H1 (cell line): ENCODE measurements at regions of chr11 and their contacts with region 1.

Region 1: GRCh38 chr11:27183672-27184457 is 143.2 kb downstream of the BBOX1 start:
- DNase-seq: no peak
- H3K4me3 ChIP-seq: no peak overlapping the region
- H3K27ac ChIP-seq: no peak overlapping the region
- H3K4me1 ChIP-seq: no peaks in the 10 kb centered on the region
- H3K27me3 ChIP-seq: no peaks in the 10 kb centered on the region
- CTCF ChIP-seq: peak in 2 of 3 experiments; percentile 59 to 61; a peak in 2 of 4 replicates
- EP300 ChIP-seq: no peak
- POLR2A ChIP-seq: no peak
- RAD21 ChIP-seq: peak; percentile 91 to 92

Region 2: GRCh38 chr11:27201454-27202236 is 17.8 kb after region 1 on chr11:
- CTCF ChIA-PET with region 1: interaction called, 16 read pairs
- POLR2A ChIA-PET with region 1: no interaction called
- DNase-seq: no peak
- H3K4me3 ChIP-seq: no peak overlapping the region
- H3K27ac ChIP-seq: no peak overlapping the region
- H3K4me1 ChIP-seq: peaks cover 0 to 8% (median 5%) of the 10 kb centered on the region in 4 experiments; a peak in 3 of 7 replicates
- H3K27me3 ChIP-seq: no peaks in the 10 kb centered on the region
- CTCF ChIP-seq: no peak
- EP300 ChIP-seq: no peak
- POLR2A ChIP-seq: no peak
- RAD21 ChIP-seq: no peak

Region 3: DNA sequence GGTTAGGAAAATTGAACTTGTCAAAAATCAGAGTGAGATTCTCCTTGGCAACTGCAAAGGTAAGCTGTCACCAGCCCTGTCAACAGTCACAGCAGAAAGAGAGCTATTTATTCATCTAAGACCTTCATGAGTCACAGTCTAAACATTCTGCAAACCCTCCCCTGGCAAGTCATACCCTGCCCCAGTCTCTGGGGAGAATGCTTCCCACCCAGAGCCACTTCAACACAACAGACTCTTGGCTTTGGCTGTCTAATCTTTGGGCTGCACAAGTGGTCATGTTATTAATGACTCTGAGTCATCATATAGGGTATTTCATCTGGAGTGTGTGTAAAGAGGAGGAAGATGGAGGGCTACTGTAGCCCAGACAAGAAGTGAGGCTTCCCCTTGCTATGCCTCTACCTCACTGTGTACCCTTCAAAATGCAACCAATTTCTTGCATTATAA is 25.7 kb after region 1 on chr11:
- CTCF ChIA-PET with region 1: interaction called, 18 read pairs
- POLR2A ChIA-PET with region 1: no interaction called
- DNase-seq: no peak
- H3K4me3 ChIP-seq: no peak overlapping the region
- H3K27ac ChIP-seq: no peak overlapping the region
- H3K4me1 ChIP-seq: no peaks in the 10 kb centered on the region
- H3K27me3 ChIP-seq: no peaks in the 10 kb centered on the region
- CTCF ChIP-seq: no peak
- EP300 ChIP-seq: no peak
- POLR2A ChIP-seq: no peak
- RAD21 ChIP-seq: no peak